Ascending aorta (tissue), 2 donors: ENCODE measurements at regions of chr20 and their contacts with region 1.

Region 1: GRCh38 chr20:25136643-25137559 is 55.0 kb upstream of the VSX1 start:
- DNase-seq: peak; percentile 40 to 90
- H3K4me3 ChIP-seq: no peak overlapping the region
- H3K27ac ChIP-seq: peak overlapping the region in 1 of 2 donors; percentile 26
- H3K4me1 ChIP-seq: peaks cover 0 to 3% of the 10 kb centered on the region in 2 donors
- H3K27me3 ChIP-seq: no peaks in the 10 kb centered on the region
- CTCF ChIP-seq: no peak

Region 2: DNA sequence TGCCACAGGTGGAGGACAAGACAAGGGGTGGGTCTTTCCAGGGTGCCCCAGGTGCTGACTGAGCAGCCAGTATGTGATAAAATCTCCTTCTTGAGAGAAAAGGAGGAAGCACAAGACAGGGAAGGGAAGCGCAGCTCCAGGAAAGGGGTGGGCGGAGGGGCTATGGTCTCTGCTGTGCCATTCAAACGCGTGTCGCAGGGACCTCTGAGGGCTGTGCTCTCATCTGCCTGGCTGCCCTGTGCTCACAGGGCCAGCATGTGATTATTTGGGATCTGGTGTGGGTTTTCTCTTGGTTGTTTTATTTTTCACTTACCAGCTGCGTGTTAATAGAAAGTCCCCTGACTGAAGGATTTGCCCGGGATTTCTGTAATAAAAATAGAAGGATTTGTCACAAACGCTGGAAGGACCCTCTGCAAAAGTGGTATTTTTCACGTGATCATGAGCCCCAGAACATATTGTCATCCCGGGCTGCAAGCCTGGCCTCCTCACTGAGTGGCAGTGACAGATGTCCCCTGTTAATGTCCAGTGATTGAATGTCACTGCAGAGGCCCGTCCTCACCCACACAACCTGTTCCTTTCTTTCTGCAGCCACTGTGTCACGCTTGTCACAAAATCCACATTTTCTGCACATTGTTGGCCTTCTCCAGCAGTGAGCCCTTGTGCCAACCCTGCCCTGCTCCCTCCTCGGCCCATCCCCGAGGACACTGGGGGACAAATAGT is 20.0 kb before region 1 on chr20:
- intact Hi-C with region 1: loop called (anchors 1 kb)
- DNase-seq: no peak
- H3K4me3 ChIP-seq: no peak overlapping the region
- H3K27ac ChIP-seq: no peak overlapping the region
- H3K4me1 ChIP-seq: peaks cover 5 to 18% of the 10 kb centered on the region in 2 donors
- H3K27me3 ChIP-seq: no peaks in the 10 kb centered on the region
- CTCF ChIP-seq: no peak